ENCODE measurements at regions of chr7 and their contacts with region 1.

Region 1: GRCh38 chr7:116802746-116803152 is 59.6 kb upstream of the CAPZA2 start:
- DNase-seq: peak; percentile 89
- H3K4me3 ChIP-seq: peak overlapping the region; percentile 6
- H3K27ac ChIP-seq: peak overlapping the region; percentile 56
- H3K4me1 ChIP-seq: peaks cover 57% of the 10 kb centered on the region
- H3K27me3 ChIP-seq: no peaks in the 10 kb centered on the region
- CTCF ChIP-seq: peak; percentile 72

Region 2: GRCh38 chr7:116534790-116535189 is 268.0 kb before region 1 on chr7:
- CTCF ChIA-PET with region 1: no interaction called
- POLR2A ChIA-PET with region 1: interaction called, 3 read pairs
- intact Hi-C with region 1: loop called (anchors 5 kb)
- DNase-seq: no peak
- H3K4me3 ChIP-seq: peak overlapping the region; percentile 23
- H3K27ac ChIP-seq: peak overlapping the region; percentile 64
- H3K4me1 ChIP-seq: peaks cover 75% of the 10 kb centered on the region
- H3K27me3 ChIP-seq: no peaks in the 10 kb centered on the region
- CTCF ChIP-seq: no peak

Region 3: DNA sequence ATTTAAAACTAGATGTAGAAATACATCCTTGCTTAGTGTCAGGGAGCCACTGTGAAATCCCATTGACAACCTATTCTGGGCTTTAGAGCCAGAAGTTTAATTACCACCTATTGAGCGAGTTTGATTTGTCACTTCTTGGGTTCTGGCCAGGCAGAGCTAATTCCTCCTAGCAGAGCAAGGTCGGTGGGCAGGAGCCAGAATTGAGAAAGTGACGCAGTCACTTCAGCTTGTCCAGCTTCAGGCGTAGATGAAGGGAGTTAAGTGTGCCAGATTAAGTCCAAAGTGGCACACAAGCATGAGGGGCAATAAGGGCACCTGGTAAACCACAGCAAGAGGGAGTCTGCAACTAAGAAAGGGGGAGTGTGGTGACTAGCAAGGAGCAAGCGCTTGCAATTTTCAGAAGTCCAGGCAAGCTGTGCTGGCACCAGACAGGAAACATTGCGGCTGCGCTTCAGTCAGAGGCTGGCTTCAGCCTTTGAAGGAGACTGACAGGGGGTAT is 269.9 kb after region 1 on chr7:
- CTCF ChIA-PET with region 1: no interaction called
- POLR2A ChIA-PET with region 1: no interaction called
- intact Hi-C with region 1: no loop called
- DNase-seq: peak; percentile 94
- H3K4me3 ChIP-seq: peak overlapping the region; percentile 8
- H3K27ac ChIP-seq: no peak overlapping the region
- H3K4me1 ChIP-seq: peaks cover 56% of the 10 kb centered on the region
- H3K27me3 ChIP-seq: no peaks in the 10 kb centered on the region
- CTCF ChIP-seq: no peak